ENCODE measurements at regions of chr16 and their contacts with region 1.

Region 1: DNA sequence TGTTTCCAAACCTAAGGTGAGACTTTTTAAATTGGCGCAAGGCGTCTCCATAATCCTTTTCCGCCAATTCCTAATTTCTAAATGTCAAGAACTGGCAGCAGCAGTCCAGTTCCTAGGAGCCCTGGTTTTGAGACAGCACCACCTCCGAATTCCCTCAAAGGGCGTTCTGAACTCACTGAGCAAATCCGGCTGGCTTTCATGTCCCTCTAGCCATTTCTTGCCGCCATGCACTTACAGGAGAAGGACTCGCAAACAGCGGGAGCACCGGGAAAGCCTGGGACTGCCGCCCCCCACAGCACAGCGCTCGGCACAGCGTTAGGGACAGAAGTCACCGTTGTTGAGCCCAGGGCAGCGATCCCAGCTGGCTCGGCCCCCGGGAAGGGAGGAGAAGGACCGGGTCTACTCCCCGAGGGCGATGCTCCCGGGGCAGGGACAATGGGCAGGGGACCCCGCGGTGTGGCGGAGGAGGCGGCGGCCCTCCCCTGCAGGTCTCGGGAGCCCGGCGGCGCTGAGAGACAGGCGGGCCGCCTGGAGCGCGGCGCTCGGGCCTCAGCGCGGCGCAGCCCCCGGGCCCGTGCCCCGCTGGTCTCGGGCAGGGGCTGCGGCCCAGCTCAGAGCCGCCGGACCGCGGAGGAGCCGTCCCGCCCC is 545 bp downstream of the ARHGAP17 start:
- DNase-seq: peak; percentile 45
- ATAC-seq: peak; percentile 52
- H3K4me3 Mint-ChIP-seq: peak overlapping the region; percentile 85
- H3K27ac Mint-ChIP-seq: peak overlapping the region; percentile 90
- H3K4me1 Mint-ChIP-seq: peaks cover 75% of the 10 kb centered on the region
- H3K27me3 Mint-ChIP-seq: no peaks in the 10 kb centered on the region

Region 2: DNA sequence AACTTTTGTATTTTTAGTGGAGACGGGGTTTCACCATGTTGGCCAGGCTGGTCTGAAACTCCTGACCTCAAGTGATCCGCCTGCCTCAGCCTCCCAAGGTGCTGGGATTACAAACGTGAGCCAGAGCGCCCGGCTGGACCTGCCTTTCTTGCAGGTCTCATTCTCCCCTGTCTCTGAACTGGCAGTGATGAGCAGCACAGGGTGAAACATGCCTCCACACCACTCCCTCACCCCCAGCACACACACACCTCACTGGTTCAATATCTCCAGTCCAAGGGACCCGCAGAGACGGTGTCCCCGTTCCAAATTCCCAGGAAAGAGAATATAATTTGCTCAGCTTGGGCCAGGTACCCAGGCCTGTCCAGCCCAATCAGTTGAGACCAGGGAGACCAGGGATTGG is 145.6 kb before region 1 on chr16:
- CTCF ChIA-PET with region 1: no interaction called
- DNase-seq: no peak
- ATAC-seq: no peak
- H3K4me3 Mint-ChIP-seq: no peak overlapping the region
- H3K27ac Mint-ChIP-seq: no peak overlapping the region
- H3K4me1 Mint-ChIP-seq: no peaks in the 10 kb centered on the region
- H3K27me3 Mint-ChIP-seq: peaks cover 20% of the 10 kb centered on the region

Region 3: GRCh38 chr16:25024900-25025299 is 10.3 kb after region 1 on chr16:
- CTCF ChIA-PET with region 1: no interaction called
- DNase-seq: no peak
- ATAC-seq: no peak
- H3K4me3 Mint-ChIP-seq: no peak overlapping the region
- H3K27ac Mint-ChIP-seq: no peak overlapping the region
- H3K4me1 Mint-ChIP-seq: peaks cover 14% of the 10 kb centered on the region
- H3K27me3 Mint-ChIP-seq: no peaks in the 10 kb centered on the region

Region 4: DNA sequence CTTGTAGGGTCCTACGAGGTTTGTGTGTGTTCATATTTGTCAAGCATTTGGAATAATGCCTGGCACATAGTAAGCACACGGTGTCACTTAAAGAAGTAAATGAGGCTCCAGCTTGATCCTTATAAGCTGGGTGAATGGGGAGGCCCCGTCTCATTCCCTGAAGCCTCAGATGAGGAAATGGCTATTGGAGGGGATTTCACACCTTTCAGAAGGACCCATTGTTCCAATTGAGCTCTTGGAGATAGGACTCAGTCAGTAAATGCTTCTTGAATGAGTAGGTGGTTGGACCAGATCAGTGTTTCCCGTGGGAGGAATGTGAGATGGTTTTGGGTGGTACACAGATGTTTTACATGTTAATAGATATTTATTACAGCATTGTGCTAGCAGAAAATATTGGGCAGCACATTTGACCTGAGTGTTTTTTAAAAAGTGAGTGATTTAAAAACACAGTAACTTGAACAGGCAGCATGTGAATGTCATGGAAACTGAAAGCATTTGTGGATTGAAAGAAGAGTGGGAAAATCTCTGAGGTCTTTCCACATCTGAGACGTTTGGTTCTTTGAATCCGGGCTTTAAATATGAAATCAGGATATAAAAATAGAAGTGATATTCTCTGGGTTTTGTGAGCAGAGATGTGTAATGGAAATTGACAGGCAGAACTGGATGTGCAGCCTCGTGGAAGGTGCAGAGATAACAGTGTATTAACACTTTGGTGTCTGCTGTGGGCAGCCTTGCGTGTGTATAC is 37.0 kb after region 1 on chr16:
- CTCF ChIA-PET with region 1: interaction called, 15 read pairs
- DNase-seq: no peak
- ATAC-seq: peak; percentile 13
- H3K4me3 Mint-ChIP-seq: peak overlapping the region; percentile 66
- H3K27ac Mint-ChIP-seq: peak overlapping the region; percentile 88
- H3K4me1 Mint-ChIP-seq: peaks cover 53% of the 10 kb centered on the region
- H3K27me3 Mint-ChIP-seq: no peaks in the 10 kb centered on the region

Region 5: DNA sequence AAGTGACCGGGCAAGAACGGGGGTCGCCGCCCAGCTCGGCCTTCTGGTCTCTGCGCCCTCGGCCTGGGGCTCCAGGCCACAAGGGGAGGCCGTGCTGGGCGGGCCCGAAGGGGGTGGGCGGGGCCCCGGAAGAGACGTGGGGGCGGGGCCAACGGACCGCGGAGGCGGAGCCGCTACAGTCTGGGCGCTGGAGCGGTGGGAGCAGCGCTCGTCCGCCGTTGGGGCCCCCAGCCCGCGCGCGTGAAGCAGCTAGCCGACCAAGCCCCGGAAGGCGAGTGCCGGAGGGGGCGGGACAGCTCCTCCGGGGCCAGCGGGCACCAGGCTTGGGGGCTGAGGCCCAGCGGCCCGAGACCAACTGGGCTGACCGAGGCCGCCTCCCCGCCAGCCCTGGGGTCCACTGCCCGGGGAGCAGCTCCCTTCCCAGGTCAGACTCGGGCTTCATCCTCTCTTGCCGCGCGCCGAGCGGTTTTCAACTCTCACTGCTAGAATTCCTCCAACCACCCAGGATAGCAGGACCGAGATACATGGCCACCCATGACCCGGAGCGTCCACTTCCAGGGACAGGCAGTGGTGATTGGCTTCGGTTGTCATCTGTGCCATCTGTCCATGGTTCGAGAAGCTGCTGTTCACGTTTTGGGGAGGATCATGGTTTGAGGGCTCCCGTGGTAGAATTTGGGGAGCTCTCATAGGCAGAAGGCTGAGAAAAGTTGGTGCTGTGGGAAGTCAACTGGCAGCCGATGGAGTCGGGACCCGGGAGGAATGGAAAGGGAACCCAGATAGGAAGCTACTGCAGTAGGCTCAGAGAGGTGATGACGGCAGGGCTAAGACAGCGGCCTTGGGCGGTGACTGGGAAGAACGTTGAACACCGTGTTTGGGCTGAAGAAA is 52.4 kb after region 1 on chr16:
- CTCF ChIA-PET with region 1: interaction called, 13 read pairs
- DNase-seq: peak; percentile 90
- ATAC-seq: peak; percentile 97
- H3K4me3 Mint-ChIP-seq: peak overlapping the region; percentile 85
- H3K27ac Mint-ChIP-seq: peak overlapping the region; percentile 88
- H3K4me1 Mint-ChIP-seq: peaks cover 46% of the 10 kb centered on the region
- H3K27me3 Mint-ChIP-seq: no peaks in the 10 kb centered on the region